GM10248 (cell line): ENCODE measurements at regions of chr2 and their contacts with region 1.

Region 1: GRCh38 chr2:178414266-178415247 is 36.4 kb downstream of the PRKRA start:
- DNase-seq: peak; percentile 79
- CTCF ChIP-seq: peak; percentile 87

Region 2: DNA sequence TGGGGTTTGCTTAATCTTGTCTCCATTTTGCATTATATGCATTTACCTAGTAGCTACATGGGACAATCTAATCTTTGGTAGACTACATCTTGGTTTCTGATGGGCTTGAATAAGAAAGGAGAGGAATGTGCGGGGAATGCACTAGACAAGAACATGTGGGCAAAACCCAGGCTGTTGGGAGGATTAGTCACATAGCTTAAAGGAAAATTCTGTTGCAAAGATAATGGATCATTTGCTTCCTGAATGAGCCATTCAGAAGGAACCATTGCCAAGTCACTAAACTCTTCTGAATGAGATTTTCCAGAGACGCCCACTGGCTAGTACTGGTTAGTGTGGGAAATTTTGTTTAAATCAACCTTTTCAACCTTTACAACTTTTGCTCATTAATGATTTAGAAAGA is 135.4 kb before region 1 on chr2:
- CTCF ChIA-PET with region 1: no interaction called
- POLR2A ChIA-PET with region 1: no interaction called
- DNase-seq: no peak
- CTCF ChIP-seq: no peak

Region 3: GRCh38 chr2:178306352-178307073 is 108.0 kb before region 1 on chr2:
- CTCF ChIA-PET with region 1: interaction called, 18 read pairs
- POLR2A ChIA-PET with region 1: no interaction called
- DNase-seq: peak; percentile 54
- CTCF ChIP-seq: peak; percentile 74

Region 4: GRCh38 chr2:178404368-178404767 is 10.2 kb before region 1 on chr2:
- CTCF ChIA-PET with region 1: interaction called, 170 read pairs
- POLR2A ChIA-PET with region 1: interaction called, 12 read pairs
- DNase-seq: peak; percentile 81
- CTCF ChIP-seq: no peak

Region 5: GRCh38 chr2:178441426-178441825 is 26.9 kb after region 1 on chr2:
- CTCF ChIA-PET with region 1: interaction called, 19 read pairs
- POLR2A ChIA-PET with region 1: interaction called, 7 read pairs
- DNase-seq: no peak
- CTCF ChIP-seq: no peak